HepG2 (cell line): ENCODE measurements at regions of chr16 and their contacts with region 1.

Region 1: GRCh38 chr16:22898874-22899348 is 84.9 kb downstream of the HS3ST2 start:
- DNase-seq: peak; percentile 70
- ATAC-seq: peak; percentile 93
- H3K4me3 ChIP-seq: no peak overlapping the region
- H3K27ac ChIP-seq: no peak overlapping the region
- H3K4me1 ChIP-seq: no peaks in the 10 kb centered on the region
- H3K27me3 ChIP-seq: peaks cover 3 to 22% of the 10 kb centered on the region in 2 experiments; a peak in 3 of 5 replicates
- CTCF ChIP-seq: peak; percentile 94
- EP300 ChIP-seq: no peak
- POLR2A ChIP-seq: no peak
- RAD21 ChIP-seq: peak; percentile 89

Region 2: DNA sequence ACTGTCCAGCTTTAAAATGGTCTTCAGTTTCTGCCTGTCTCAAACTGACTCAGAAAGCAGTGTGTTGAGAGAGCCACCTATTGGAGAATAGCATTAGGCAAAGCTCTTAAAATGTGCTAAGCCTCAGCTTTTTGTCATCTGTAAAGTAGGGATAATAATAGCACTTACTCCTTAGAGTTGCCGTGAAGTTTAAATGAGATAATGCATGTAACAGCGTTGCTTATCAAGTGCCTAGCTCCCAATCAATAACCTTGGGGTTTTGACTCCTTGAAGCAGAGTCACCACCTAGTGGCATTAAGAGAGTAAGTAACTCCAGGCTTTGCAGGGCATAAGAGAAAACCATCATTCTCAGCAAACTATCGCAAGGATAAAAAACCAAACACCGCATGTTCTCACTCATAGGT is 78.4 kb after region 1 on chr16:
- CTCF ChIA-PET with region 1: interaction called, 6 read pairs
- POLR2A ChIA-PET with region 1: no interaction called
- in situ Hi-C with region 1: no loop called
- intact Hi-C with region 1: loop called (anchors 2 kb)
- DNase-seq: peak; percentile 39
- ATAC-seq: peak; percentile 69
- H3K4me3 ChIP-seq: no peak overlapping the region
- H3K27ac ChIP-seq: no peak overlapping the region
- H3K4me1 ChIP-seq: no peaks in the 10 kb centered on the region
- H3K27me3 ChIP-seq: 0 out of 5 replicates have a peak, but pooled peaks cover 0 to 9% of the 10 kb centered on the region in 2 experiments
- CTCF ChIP-seq: peak; percentile 50
- EP300 ChIP-seq: no peak
- POLR2A ChIP-seq: no peak
- RAD21 ChIP-seq: no peak

Region 3: DNA sequence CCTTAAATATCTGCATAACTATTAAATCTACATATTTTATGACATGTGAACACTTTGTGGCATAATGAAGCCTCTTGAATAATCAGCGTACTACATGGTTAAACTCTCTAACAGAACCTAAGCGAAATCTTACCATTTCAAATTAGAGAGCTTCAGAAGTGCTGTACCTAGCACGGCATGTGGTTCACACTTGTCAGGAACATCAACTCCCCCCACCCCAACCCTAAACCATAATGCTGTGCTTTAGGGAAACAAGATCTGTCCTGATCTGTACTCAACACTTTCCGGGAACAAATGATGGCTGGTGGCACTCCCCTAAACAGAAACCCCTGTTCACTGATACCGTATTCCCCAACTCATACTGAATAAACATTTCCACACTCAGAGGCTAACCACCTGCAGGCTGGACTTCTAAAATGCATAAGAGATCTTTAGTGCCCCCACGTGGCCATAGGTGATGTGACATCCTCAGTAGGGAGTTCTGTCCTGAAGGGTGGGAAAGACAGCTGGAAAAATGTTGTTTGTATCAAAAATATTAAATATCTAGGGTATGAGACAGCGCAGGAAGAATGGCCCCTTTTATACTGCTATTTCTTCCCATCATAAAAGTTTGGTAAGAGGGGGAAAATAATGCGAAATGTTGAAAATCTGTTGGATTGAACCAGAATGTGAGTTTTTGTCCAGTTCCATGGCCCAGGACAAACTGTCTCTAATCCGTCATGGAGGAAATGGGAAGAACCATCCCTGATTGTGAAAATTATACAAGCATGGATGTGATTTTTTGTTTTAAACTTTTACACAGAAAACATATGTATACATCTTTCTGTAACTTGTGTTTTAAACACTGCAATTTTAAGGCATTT is 161.8 kb after region 1 on chr16:
- CTCF ChIA-PET with region 1: interaction called, 22 read pairs
- POLR2A ChIA-PET with region 1: no interaction called
- in situ Hi-C with region 1: loop called (anchors 5 kb)
- intact Hi-C with region 1: loop called (anchors 1 kb)
- DNase-seq: peak; percentile 89
- ATAC-seq: peak; percentile 93
- H3K4me3 ChIP-seq: no peak overlapping the region
- H3K27ac ChIP-seq: no peak overlapping the region
- H3K4me1 ChIP-seq: no peaks in the 10 kb centered on the region
- H3K27me3 ChIP-seq: no peaks in the 10 kb centered on the region
- CTCF ChIP-seq: peak; percentile 94
- EP300 ChIP-seq: no peak
- POLR2A ChIP-seq: no peak
- RAD21 ChIP-seq: peak; percentile 72

Region 4: DNA sequence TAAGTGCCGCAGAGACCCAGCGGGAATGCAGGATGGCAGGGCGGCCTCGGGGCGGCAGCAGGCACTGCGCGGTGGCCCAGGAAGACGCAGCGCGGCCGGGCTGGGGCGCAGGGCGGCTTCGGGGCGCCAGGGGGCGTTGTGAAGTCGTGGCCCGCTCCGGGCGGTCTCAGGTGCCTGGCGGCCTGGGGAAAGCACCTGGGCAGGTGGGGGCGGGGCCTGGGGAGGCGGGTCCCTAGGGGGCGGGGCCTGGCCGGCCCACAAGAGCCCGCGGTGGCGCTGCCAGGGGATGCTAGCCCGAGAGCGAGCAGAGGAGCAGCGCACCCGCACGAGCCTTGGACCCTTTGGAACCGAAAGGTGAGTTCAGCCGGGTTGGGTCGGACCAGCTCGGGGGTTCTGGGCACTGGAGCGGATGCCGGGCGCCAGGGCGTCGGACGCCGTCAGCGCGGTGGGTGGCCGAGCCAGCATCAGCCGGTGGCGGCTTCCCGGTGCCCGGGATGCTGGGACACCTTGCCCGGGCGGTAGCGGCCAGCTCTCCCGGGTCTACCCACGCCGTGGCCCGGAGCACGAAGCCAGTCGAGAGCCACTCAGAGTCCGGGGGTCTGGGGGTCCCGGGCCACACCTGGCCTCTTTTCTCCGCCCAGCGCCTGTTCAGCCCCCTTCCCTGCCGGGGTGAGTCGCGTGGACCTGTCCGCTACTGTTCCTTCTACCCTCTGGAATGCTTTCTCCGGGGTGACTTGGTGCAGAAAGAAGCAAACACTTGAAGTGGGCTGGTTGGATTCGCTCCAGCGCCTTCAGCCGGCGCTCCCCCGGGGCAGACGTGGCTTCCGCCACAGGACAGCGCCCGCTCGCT is 283.8 kb after region 1 on chr16 and contains the start of gene SCNN1G:
- CTCF ChIA-PET with region 1: no interaction called
- POLR2A ChIA-PET with region 1: no interaction called
- in situ Hi-C with region 1: no loop called
- intact Hi-C with region 1: loop called (anchors 10 kb)
- DNase-seq: peak; percentile 62
- ATAC-seq: peak; percentile 99
- H3K4me3 ChIP-seq: peak within 1 kb of the TSS in 2 of 3 experiments; percentile 1 to 56; a peak in 2 of 6 replicates
- H3K27ac ChIP-seq: no peak within 1 kb of the TSS
- H3K4me1 ChIP-seq: peaks cover 8% of the 10 kb centered on the region
- H3K27me3 ChIP-seq: peaks cover 19 to 55% of the 10 kb centered on the region in 2 experiments
- CTCF ChIP-seq: peak; percentile 95
- EP300 ChIP-seq: no peak
- POLR2A ChIP-seq: no peak
- RAD21 ChIP-seq: peak; percentile 100
- total RNA-seq, gene SCNN1G: not detected in 2 replicates